WTC11 (cell line): ENCODE measurements at regions of chr10 and their contacts with region 1.

Region 1: GRCh38 chr10:113297226-113297625 is 255.6 kb upstream of the HABP2 start:
- DNase-seq: no peak
- ATAC-seq: no peak
- H3K4me3 Mint-ChIP-seq: no peak overlapping the region
- H3K27ac Mint-ChIP-seq: no peak overlapping the region
- H3K4me1 Mint-ChIP-seq: peaks cover 19% of the 10 kb centered on the region
- H3K27me3 Mint-ChIP-seq: no peaks in the 10 kb centered on the region
- CTCF ChIP-seq: no peak

Region 2: DNA sequence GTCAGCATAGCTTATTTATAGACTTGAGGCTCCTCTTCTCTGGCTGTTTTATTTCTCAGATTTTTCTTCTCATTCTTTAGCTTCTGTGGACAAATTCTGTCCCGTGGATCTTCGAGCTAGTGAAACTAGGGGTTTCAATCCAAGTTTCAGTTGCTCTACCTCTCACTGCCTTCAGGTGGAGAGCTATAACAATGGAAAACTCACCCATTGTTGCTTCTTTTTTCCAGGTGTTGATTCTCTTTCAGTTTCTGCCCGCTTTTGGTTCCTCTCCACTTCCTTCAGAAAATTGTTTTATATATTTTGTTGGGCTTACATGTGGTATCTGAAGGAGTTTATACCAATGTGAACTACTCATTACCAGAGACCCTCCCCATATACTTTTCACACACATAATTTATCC is 81.1 kb before region 1 on chr10:
- CTCF ChIA-PET with region 1: interaction called, 15 read pairs
- POLR2A ChIA-PET with region 1: no interaction called
- DNase-seq: no peak
- ATAC-seq: peak; percentile 61
- H3K4me3 Mint-ChIP-seq: no peak overlapping the region
- H3K27ac Mint-ChIP-seq: peak overlapping the region; percentile 31; the same call in 1 of the 2 replicates
- H3K4me1 Mint-ChIP-seq: no peaks in the 10 kb centered on the region; the same call in 1 of the 2 replicates
- H3K27me3 Mint-ChIP-seq: no peaks in the 10 kb centered on the region; the same call in 1 of the 2 replicates
- CTCF ChIP-seq: no peak

Region 3: GRCh38 chr10:113232928-113233511 is 64.2 kb before region 1 on chr10:
- CTCF ChIA-PET with region 1: no interaction called
- POLR2A ChIA-PET with region 1: no interaction called
- DNase-seq: no peak
- ATAC-seq: peak; percentile 75
- H3K4me3 Mint-ChIP-seq: no peak overlapping the region
- H3K27ac Mint-ChIP-seq: no peak overlapping the region
- H3K4me1 Mint-ChIP-seq: peaks cover 6% of the 10 kb centered on the region
- H3K27me3 Mint-ChIP-seq: no peaks in the 10 kb centered on the region
- CTCF ChIP-seq: no peak

Region 4: GRCh38 chr10:113316506-113316905 is 19.3 kb after region 1 on chr10:
- CTCF ChIA-PET with region 1: interaction called, 13 read pairs
- POLR2A ChIA-PET with region 1: no interaction called
- DNase-seq: no peak
- ATAC-seq: peak; percentile 46
- H3K4me3 Mint-ChIP-seq: no peak overlapping the region
- H3K27ac Mint-ChIP-seq: no peak overlapping the region
- H3K4me1 Mint-ChIP-seq: no peaks in the 10 kb centered on the region
- H3K27me3 Mint-ChIP-seq: no peaks in the 10 kb centered on the region; the same call in 1 of the 2 replicates
- CTCF ChIP-seq: no peak